ENCODE measurements at regions of chr3 and their contacts with region 1.

Region 1: DNA sequence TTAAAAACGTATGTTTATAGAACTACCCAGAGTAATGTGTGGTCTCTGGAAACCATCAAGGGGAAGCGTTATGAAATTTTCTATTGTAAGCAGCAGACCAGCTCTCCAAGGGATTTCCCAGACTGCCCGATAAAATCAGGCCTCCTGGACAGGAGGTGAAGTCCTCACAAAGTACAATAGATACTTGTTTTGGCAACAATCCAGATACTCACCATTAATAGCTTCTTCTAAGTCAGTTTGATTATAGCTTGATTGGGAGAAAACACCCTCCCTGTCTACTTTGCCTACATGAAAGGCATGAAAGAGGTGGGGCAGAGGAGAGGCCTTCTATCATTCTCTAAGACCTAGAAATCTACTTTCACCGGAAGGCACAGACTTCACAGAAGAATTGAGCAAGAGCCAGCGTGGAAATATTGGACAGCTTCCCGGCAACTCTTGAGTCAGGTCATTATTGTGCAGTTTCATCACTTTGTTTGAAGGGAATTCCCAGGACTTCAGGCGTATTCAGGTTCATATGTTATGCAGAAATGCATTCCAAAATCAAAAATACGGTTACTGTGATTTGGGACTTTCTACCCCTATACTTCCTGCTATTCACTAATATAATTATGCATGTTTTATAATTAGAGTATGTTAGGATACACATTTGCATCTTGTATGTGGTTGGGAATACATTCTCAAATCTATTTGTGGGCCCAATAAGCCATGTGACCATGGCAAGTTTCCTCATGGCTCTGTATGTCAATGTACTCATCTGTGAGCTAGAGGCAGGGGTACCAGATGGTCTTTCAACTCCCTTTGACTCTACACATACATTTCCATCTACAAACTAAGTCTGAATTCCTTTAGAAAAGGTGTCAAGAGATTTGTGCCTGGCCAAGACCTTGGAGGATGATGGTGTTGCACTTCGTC is 103.5 kb downstream of the CD47 start:
- H3K4me3 Mint-ChIP-seq: no peak overlapping the region
- H3K27ac Mint-ChIP-seq: peak overlapping the region; percentile 96
- H3K4me1 Mint-ChIP-seq: peaks cover 58% of the 10 kb centered on the region
- H3K27me3 Mint-ChIP-seq: no peaks in the 10 kb centered on the region

Region 2: DNA sequence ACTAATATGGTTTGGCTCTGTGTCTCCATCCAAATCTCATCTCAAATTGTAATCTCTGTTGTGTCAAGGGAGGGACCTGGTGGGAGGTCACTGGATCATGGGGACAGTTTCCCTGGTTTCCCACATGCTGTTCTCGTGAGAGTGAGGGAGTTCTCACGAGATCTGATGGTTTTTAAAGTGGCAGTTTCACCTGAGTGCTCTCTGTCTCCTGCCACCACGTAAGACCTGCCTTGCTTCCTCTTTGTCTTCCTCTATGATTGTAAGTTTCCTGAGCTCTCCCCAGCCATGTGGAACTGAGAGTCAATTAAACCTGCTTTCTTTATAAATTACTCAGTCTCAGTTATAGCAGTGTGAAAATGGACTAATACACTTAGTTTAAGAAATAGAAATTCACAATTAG is 125.4 kb before region 1 on chr3:
- intact Hi-C with region 1: no loop called
- H3K4me3 Mint-ChIP-seq: no peak overlapping the region
- H3K27ac Mint-ChIP-seq: no peak overlapping the region
- H3K4me1 Mint-ChIP-seq: peaks cover 7% of the 10 kb centered on the region
- H3K27me3 Mint-ChIP-seq: peaks cover 4% of the 10 kb centered on the region

Region 3: DNA sequence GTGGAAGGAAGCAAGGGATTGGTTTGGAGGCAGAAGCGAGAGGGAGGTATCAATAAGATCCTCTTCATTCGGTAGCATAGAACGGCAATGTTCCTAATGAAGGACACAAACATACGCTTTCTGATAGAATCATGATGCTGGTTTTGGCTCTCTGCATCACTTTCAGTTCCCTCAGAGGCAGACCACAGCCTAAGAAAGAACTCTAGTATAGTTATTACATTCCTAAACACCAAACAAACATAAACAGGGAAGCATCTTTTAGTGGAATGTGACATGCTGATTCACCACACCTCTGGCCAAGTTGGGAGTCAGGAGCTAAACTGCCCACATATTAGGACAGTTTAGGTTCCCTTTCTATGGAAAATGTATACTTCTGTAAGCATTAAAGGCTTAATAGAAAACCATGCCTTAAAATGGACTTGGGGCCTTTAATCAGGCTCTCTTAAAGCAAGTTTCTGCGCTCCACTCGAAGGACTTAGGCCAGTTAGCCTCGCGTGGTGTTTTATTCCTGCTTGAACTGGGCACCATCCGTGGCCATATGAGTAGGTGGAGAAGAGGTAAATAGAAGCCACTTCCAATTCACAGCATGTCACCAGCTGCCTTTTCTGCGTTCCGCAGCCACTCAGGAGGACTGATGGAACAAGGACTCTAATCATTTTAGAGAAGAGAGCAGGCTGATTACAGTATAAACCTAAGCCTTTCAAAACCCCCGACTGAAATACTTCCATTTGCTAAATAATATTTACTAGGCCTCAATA is 49.9 kb after region 1 on chr3:
- intact Hi-C with region 1: loop called (anchors 5 kb)
- H3K4me3 Mint-ChIP-seq: no peak overlapping the region
- H3K27ac Mint-ChIP-seq: peak overlapping the region; percentile 86
- H3K4me1 Mint-ChIP-seq: peaks cover 66% of the 10 kb centered on the region
- H3K27me3 Mint-ChIP-seq: no peaks in the 10 kb centered on the region